ENCODE measurements at regions of chr6 and their contacts with region 1.

Region 1: DNA sequence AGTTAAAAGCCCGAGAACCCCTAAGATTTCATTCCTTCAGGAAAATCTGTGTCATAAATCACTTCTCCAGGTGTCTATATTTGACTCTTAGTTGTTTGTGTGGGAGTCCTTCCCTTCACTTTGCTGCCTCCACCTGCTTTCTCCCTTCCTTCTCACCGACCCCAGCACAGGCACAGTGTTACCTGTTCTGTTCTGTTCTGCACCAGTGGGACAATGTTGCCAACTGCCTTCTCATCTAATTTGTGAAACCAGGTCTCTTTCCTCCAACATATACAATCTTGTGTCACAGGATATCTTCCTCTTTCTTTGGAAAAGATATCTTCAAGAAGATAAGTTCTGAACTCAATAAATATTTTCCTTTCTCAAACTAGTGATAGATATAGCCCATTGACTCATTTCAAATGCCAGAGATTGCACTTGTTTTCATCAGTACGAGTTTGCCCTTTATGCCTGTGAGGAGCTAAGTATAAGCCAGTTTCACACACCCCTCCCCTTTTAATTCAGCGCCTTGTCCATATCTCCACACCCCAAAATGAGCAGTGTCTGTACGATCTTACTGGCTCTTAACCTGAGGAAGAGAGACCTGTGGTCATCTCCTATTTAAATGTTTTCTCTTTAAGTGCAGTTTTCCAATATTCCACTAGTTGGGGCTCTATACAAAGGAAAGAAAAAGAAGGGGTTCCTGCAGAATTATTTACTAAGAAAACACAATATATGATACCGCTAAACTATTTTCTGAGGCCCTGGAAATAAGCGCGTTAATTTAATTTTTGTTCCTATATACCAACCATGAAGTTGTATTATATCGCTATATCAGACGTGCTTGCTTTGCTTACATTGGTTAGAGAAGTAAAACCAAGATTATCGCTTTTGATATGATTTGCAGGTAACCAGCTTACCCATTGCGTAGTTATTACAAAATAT is 81.6 kb upstream of the PREP start:
- DNase-seq: no peak

Region 2: DNA sequence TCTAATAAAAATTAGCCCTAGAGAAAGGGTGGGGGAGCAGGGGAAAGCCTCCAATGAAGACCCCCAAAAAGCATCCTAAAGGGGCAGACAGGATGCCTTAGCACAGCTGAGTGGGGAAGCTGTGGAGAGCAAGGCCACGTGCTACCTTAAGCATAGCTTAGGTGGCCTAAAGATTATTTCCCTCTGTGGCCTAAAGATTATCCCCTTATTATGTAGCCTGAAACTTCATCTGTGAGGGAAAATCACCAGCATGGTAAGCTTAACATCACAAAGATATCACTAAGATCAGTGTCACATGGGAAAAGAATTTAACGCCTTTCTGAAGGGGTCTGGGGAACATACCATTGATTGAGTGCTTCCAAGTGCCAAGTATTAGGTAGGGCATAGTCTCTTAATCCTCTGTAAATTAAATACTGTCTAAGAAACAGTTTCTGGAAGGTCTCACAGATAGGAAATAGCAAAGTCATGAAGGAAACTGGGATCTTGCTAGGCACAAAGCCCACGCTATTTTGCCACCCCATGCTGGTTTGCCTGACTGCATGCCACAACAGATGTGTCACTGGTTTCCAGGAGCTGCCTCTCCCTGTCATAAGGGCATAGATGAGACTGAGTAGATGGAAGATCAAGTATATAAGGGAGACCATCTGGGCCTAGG is 794.8 kb before region 1 on chr6:
- intact Hi-C with region 1: no loop called
- DNase-seq: no peak

Region 3: GRCh38 chr6:105301072-105301503 is 183.4 kb before region 1 on chr6:
- intact Hi-C with region 1: no loop called
- DNase-seq: no peak

Region 4: GRCh38 chr6:105739764-105740163 is 255.3 kb after region 1 on chr6:
- intact Hi-C with region 1: loop called (anchors 5 kb)
- DNase-seq: no peak

Region 5: DNA sequence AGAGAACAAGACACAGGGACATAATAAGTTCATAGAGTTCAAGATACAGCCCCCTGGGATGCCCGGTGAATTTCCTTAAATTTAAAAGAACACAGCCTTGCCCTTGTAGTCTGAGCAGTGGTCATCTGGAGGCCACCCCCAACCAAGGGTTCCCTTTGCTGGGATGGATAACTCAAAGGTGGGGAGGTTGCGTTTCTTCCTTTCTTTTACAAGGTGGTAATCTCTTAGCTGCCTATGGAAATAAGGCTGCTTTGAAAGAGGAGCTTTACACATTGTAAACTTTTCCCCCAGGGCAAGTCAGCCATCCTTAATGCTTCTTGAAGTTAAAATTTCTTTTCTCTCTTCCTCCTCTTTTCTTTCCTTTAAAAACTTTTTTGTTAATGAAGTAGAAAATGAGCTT is 530.4 kb after region 1 on chr6:
- intact Hi-C with region 1: no loop called
- DNase-seq: no peak

Region 6: GRCh38 chr6:106097411-106098231 is 613.1 kb after region 1 on chr6:
- intact Hi-C with region 1: loop called (anchors 10 kb)
- DNase-seq: no peak

Region 7: DNA sequence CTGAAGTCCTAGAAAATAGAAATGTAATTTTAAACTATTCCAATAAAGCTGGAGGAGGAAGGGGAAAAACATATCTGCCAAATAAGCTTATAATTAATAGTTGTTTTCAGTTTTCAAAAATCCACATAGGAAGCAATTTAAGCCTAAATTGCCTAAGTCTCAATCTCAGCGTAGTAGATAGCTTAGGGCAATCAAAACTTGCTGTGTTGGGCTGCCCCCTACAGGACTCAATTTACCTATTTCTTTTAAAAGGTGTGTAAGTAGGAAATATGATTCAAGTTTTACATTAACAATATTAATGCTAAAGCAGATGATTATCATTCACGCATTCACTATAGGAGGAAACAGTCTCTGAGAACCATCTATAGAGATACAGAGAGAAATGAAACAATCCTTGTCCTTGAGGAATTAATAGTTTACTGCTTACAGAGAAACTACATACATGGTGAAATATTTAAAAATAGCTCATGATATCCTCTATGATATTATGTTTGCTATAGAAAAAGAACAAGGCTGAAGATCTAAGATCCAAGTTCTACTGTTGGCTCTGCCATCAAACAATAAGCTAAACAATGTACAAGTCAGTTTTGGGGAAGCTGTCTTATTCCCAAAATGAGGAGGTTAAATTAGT is 738.9 kb after region 1 on chr6:
- intact Hi-C with region 1: loop called (anchors 2 kb)
- DNase-seq: peak in 6 of 10 donors; percentile 21 to 66 (median 48)

Region 8: GRCh38 chr6:106300944-106301343 is 816.4 kb after region 1 on chr6:
- intact Hi-C with region 1: loop called (anchors 5 kb)
- DNase-seq: no peak